ENCODE measurements at regions of chr3 and their contacts with region 1.

Region 1: GRCh38 chr3:172750368-172751174 is at the start of gene ECT2:
- DNase-seq: peak; percentile 97 to 100 (median 98)

Region 2: GRCh38 chr3:172673210-172673679 is 77.3 kb before region 1 on chr3:
- intact Hi-C with region 1: loop called (anchors 2 kb)
- DNase-seq: peak in 4 of 10 donors; percentile 15 to 62 (median 24)

Measured in posterior cingulate gyrus (tissue), 11 donors.